ENCODE measurements at regions of chr11 and their contacts with region 1.

Region 1: GRCh38 chr11:14907411-14908213 is 15.6 kb upstream of the CYP2R1 start:
- DNase-seq: peak; percentile 82
- H3K4me3 Mint-ChIP-seq: peak overlapping the region; percentile 14
- H3K27ac Mint-ChIP-seq: peak overlapping the region; percentile 60
- H3K4me1 Mint-ChIP-seq: peaks cover 11% of the 10 kb centered on the region
- H3K27me3 Mint-ChIP-seq: no peaks in the 10 kb centered on the region
- CTCF ChIP-seq: peak; percentile 80

Region 2: GRCh38 chr11:14454861-14455632 is 452.6 kb before region 1 on chr11:
- CTCF ChIA-PET with region 1: no interaction called
- intact Hi-C with region 1: no loop called
- DNase-seq: no peak
- H3K4me3 Mint-ChIP-seq: no peak overlapping the region
- H3K27ac Mint-ChIP-seq: no peak overlapping the region
- H3K4me1 Mint-ChIP-seq: no peaks in the 10 kb centered on the region
- H3K27me3 Mint-ChIP-seq: no peaks in the 10 kb centered on the region
- CTCF ChIP-seq: peak; percentile 39

Region 3: DNA sequence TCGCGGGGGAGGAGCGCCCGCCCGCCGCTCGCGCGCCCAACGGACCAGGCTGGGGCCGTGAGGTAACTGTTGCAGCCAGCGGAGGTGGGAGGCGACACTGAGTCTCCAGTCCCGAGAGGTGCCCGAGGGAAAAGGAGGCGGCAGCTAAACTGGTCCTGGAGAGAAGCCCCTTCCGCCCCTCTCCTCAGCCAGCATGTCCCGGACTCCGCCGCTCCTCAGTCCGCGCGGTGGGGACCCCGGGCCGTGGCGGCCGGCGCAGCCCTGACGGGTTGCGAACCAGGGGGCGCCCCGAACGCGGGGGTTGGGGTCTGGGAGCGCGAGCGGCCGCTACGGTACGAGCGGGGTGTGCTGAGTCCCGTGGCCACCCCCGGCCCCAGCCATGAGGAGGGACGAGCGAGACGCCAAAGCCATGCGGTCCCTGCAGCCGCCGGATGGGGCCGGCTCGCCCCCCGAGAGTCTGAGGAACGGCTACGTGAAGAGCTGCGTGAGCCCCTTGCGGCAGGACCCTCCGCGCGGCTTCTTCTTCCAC is 263.9 kb before region 1 on chr11 and contains the start of gene PDE3B:
- CTCF ChIA-PET with region 1: interaction called, 9 read pairs
- intact Hi-C with region 1: loop called (anchors 10 kb)
- DNase-seq: peak; percentile 85
- H3K4me3 Mint-ChIP-seq: peak within 1 kb of the TSS; percentile 95
- H3K27ac Mint-ChIP-seq: peak within 1 kb of the TSS; percentile 23
- H3K4me1 Mint-ChIP-seq: peaks cover 22% of the 10 kb centered on the region
- H3K27me3 Mint-ChIP-seq: no peaks in the 10 kb centered on the region
- CTCF ChIP-seq: no peak
- total RNA-seq, gene PDE3B: 4.5 and 4.6 TPM in 2 replicates

Region 4: DNA sequence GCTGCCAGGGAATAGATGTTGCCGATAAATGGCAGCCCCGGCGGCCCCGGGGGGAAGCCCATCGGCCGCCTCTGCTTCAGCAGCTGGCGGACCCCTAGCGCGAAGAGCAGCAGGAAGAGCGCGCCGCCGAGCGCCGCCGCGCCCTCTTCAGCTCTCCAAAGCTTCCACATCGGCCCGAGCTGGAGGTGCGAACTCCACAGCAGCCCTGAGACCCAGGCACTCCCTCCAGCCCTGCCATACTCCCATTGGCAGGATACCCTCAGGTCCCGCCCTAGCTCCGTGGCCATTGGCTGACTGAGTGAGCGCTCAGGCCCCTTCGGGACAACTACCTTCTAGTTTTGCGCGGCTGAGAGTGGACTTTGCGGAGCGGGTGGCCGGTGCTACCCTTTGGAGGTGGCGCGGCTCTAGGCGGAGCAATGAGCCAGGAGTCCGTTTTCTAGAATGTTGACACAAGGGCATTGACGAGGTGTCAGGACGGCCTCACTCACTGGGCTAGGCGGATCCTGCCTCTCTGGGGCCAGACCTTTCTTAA is 15.5 kb before region 1 on chr11 and contains the start of gene CYP2R1:
- CTCF ChIA-PET with region 1: interaction called, 38 read pairs
- intact Hi-C with region 1: no loop called
- DNase-seq: peak; percentile 97
- H3K4me3 Mint-ChIP-seq: peak within 1 kb of the TSS; percentile 86
- H3K27ac Mint-ChIP-seq: peak within 1 kb of the TSS; percentile 80
- H3K4me1 Mint-ChIP-seq: peaks cover 25% of the 10 kb centered on the region
- H3K27me3 Mint-ChIP-seq: no peaks in the 10 kb centered on the region
- CTCF ChIP-seq: no peak
- total RNA-seq, gene CYP2R1: 21.0 and 21.4 TPM in 2 replicates

Region 5: DNA sequence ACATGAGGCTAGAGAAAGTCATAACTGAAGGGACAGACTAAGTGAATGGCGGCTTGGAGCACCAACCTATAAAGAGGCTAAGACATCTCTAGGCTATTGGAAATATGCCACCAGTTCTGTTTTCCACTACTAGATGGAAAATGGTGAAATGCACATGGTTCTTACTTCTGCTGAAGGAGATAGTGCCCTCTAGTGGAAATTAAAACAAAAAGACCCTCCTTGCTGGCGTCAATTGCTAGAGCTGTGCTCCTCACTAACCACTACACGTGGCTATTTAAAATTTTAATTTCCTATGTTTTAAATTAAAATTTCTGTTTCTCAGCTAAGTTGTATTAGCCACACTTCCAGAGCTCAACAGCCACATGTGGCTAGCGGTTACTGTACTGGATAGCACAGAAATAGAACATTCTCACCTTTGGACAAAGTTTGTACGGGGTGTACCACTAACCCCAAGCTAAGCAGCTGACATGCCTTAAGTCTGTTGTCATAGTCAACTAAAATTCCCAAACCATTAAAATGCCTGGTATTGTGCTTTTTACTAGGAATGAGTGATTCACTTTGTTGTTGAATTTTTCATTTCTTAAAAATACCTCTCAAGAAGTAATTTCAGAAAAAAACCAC is 98.6 kb after region 1 on chr11:
- CTCF ChIA-PET with region 1: interaction called, 18 read pairs
- intact Hi-C with region 1: loop called (anchors 1 kb)
- DNase-seq: peak; percentile 4
- H3K4me3 Mint-ChIP-seq: no peak overlapping the region
- H3K27ac Mint-ChIP-seq: no peak overlapping the region
- H3K4me1 Mint-ChIP-seq: no peaks in the 10 kb centered on the region
- H3K27me3 Mint-ChIP-seq: peaks cover 27% of the 10 kb centered on the region
- CTCF ChIP-seq: peak; percentile 37

Region 6: GRCh38 chr11:15101072-15101709 is 193.6 kb after region 1 on chr11:
- CTCF ChIA-PET with region 1: interaction called, 10 read pairs
- intact Hi-C with region 1: no loop called
- DNase-seq: peak; percentile 70
- H3K4me3 Mint-ChIP-seq: no peak overlapping the region
- H3K27ac Mint-ChIP-seq: no peak overlapping the region
- H3K4me1 Mint-ChIP-seq: peaks cover 7% of the 10 kb centered on the region
- H3K27me3 Mint-ChIP-seq: peaks cover 45% of the 10 kb centered on the region
- CTCF ChIP-seq: peak; percentile 88